Transverse colon (tissue), 4 donors: ENCODE measurements at regions of chr11 and their contacts with region 1.

Region 1: GRCh38 chr11:109155291-109155690 is 266.7 kb upstream of the C11orf87 start:
- DNase-seq: no peak
- H3K4me3 ChIP-seq: no peak overlapping the region
- H3K27ac ChIP-seq: no peak overlapping the region
- H3K4me1 ChIP-seq: no peaks in the 10 kb centered on the region
- H3K27me3 ChIP-seq: no peaks in the 10 kb centered on the region
- CTCF ChIP-seq: no peak
- EP300 ChIP-seq: no peak
- POLR2A ChIP-seq: no peak

Region 2: DNA sequence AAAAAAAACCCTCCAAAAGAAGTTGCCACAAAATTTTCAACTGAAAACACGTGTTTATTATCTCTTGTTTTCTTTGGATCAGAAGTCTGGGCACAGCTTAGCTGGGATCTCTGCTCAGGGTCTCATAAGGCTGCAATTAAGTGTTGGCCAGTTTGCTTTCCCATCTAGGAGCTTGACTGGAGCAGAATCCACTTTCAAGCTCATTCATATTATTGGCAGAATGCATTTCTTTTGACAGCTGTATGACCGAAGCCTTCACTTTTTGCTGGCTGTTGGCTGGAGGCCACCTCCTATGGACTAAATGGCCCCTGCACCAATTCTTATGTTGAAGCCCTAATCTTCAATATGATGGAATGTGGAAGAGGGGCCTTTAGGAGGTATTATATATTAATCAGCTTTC is 350.8 kb before region 1 on chr11:
- in situ Hi-C with region 1: no loop called
- intact Hi-C with region 1: no loop called
- DNase-seq: no peak
- H3K4me3 ChIP-seq: no peak overlapping the region
- H3K27ac ChIP-seq: no peak overlapping the region
- H3K4me1 ChIP-seq: no peaks in the 10 kb centered on the region
- H3K27me3 ChIP-seq: no peaks in the 10 kb centered on the region
- CTCF ChIP-seq: no peak
- EP300 ChIP-seq: no peak
- POLR2A ChIP-seq: no peak

Region 3: DNA sequence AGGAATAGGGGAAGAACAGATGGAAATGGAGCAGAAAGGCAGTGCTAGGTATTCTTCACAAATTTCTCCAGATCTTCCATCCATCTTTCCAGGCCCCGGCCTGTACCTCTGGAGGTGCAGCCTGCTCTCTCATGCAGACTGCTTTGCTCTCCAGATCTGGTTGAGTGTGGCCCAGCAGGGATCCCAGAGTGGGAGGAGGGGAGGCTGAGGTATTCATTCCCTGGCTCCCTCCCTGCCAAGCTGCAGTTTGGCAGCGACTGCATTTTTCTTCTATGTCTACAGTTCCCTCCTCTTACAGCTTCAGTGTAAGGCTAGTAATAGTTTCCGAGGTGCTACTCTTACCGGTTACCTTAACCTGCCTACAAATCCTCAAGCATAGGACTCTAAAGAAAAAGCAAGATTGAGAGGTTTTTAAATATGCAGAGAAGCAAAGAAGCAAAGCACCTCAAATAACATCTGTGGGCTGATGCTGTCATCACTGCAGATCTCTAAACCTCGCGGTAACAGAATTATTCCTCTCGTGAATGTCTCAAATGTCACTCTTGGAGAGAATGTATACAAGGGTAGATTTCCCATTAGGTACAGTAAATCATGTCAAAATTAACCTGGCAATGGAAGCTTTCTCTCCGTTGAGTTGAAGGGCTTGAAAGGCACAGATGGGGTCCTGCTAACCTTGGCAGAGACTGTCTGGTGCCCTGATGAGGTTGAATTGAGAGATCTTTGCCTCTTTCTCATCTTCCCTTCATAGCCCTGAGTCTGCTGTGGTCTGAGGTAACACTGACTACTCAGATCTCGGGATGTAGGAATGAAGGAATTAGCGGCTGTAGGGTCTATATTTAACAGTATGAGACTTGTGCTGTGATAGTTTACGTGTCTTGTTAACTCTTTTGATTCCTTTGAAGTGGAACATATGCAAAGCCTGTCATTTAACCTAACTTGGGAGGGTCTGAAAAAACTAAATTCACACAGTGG is 31.2 kb before region 1 on chr11:
- in situ Hi-C with region 1: no loop called
- intact Hi-C with region 1: loop called (anchors 1 kb)
- DNase-seq: no peak
- H3K4me3 ChIP-seq: no peak overlapping the region
- H3K27ac ChIP-seq: no peak overlapping the region
- H3K4me1 ChIP-seq: no peaks in the 10 kb centered on the region
- H3K27me3 ChIP-seq: no peaks in the 10 kb centered on the region
- CTCF ChIP-seq: no peak
- EP300 ChIP-seq: no peak
- POLR2A ChIP-seq: no peak

Region 4: DNA sequence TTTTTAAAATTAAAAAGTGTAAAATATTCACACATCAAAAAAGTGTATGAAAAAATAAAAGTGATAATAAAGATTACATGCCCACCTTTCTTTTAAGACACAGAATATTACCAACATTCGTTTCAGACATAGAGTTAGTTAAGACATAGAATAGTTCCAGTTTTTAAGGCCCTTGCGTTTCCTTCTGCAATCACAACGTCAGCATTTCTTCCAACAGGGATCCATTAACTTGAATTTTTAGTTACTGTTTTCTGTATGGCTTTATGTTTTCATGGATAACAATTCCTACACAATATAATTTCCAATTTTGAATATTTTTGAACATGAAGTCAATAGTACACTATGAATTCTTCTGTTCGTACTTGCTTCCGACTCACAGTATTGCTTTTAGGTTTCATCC is 95.9 kb after region 1 on chr11:
- in situ Hi-C with region 1: no loop called
- intact Hi-C with region 1: no loop called
- DNase-seq: no peak
- H3K4me3 ChIP-seq: no peak overlapping the region
- H3K27ac ChIP-seq: no peak overlapping the region
- H3K4me1 ChIP-seq: no peaks in the 10 kb centered on the region
- H3K27me3 ChIP-seq: no peaks in the 10 kb centered on the region
- CTCF ChIP-seq: no peak
- EP300 ChIP-seq: no peak
- POLR2A ChIP-seq: no peak